ENCODE measurements at regions of chr2 and their contacts with region 1.

Region 1: DNA sequence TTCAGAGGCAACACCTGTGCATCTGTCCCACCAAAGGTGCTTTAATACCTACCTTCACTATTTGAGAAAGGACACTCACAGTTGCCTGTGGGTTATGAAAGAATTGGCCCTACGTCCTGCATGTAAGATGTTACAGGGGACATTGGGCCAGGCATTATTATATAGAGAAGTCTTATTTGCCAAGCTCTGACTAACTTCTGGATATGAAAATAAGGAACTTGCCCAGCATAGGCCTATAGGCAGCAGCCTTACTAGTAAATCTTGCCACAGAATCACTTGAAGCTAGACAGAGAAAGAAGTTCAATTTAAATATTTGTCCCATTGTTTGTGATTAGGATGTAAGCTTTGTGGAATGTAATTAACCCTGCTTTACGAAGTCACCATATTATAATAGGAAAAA is 41.7 kb downstream of the NLRC4 start:
- DNase-seq: no peak
- ATAC-seq: no peak
- H3K4me3 ChIP-seq: no peak overlapping the region
- H3K27ac ChIP-seq: no peak overlapping the region
- H3K4me1 ChIP-seq: no peaks in the 10 kb centered on the region
- H3K27me3 ChIP-seq: no peaks in the 10 kb centered on the region

Region 2: DNA sequence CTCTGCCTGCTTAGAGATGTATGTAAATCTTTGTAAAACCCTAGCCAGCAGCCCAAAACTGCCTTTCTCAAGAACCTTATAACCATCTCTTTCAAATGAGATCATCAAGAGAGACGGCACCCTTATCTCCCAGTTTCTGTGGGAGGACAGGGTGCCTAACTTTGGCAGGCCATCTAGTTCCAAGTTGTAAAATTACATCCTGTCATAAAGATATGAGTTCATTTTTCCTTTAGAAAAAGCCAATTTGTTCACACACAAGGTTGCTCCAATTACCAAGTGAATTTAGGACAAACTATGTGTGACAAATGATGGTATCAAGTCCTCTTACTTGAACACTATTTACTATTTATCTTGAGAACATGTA is 277.4 kb before region 1 on chr2:
- intact Hi-C with region 1: no loop called
- DNase-seq: no peak
- ATAC-seq: no peak
- H3K4me3 ChIP-seq: no peak overlapping the region
- H3K27ac ChIP-seq: no peak overlapping the region
- H3K4me1 ChIP-seq: no peaks in the 10 kb centered on the region
- H3K27me3 ChIP-seq: no peaks in the 10 kb centered on the region

Region 3: DNA sequence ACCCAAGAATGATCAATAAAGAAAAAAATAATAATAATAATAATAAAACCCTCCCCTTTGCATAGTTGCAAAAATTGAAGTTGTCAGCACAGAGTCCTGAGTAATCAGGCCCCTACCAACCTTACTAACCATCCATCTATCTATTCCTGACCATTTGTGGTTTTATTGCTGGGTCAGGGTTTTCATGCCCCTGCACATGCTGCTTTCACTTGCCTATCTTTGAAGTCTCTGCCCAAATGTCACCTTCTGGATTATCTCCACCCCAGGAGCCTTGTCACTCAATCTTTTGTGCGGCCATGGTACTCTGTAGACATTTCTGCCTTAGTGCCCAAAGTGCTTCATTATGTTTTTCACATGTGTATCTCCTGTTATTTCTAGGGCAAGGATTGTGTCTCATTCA is 22.2 kb before region 1 on chr2:
- intact Hi-C with region 1: no loop called
- DNase-seq: no peak
- ATAC-seq: no peak
- H3K4me3 ChIP-seq: no peak overlapping the region
- H3K27ac ChIP-seq: no peak overlapping the region
- H3K4me1 ChIP-seq: no peaks in the 10 kb centered on the region
- H3K27me3 ChIP-seq: no peaks in the 10 kb centered on the region

Region 4: DNA sequence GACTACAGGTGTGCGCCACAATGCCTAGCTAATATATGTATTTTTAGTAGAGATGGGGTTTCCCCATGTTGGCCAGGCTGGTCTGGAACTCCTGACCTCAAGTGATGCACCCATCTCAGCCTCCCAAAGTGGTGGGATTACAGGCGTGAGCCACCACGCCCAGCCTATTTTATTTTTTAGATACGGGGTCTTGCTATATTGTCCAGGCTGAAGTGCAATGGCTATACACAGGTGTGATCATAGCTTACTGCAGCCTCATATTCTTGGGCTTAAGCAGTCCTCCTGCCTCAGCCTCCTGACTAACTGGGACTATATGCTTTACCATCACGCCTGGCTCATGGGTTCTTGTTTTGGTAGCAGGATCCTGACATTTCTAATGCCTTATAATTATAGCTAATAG is 176.3 kb after region 1 on chr2:
- intact Hi-C with region 1: loop called in 1 of 2 experiments (anchors 5 kb)
- DNase-seq: no peak
- ATAC-seq: no peak
- H3K4me3 ChIP-seq: no peak overlapping the region
- H3K27ac ChIP-seq: no peak overlapping the region
- H3K4me1 ChIP-seq: no peaks in the 10 kb centered on the region
- H3K27me3 ChIP-seq: no peaks in the 10 kb centered on the region